OCI-LY7 (cell line): ENCODE measurements at regions of chr3 and their contacts with region 1.

Region 1: GRCh38 chr3:177674186-177674585 is 476.9 kb upstream of the TBL1XR1 start:
- DNase-seq: no peak
- H3K4me3 ChIP-seq: no peak overlapping the region
- H3K27ac ChIP-seq: no peak overlapping the region
- H3K4me1 ChIP-seq: no peaks in the 10 kb centered on the region
- CTCF ChIP-seq: no peak

Region 2: GRCh38 chr3:177385831-177386301 is 288.3 kb before region 1 on chr3:
- CTCF ChIA-PET with region 1: no interaction called
- POLR2A ChIA-PET with region 1: no interaction called
- intact Hi-C with region 1: no loop called
- DNase-seq: no peak
- H3K4me3 ChIP-seq: no peak overlapping the region
- H3K27ac ChIP-seq: no peak overlapping the region
- H3K4me1 ChIP-seq: no peaks in the 10 kb centered on the region
- CTCF ChIP-seq: no peak

Region 3: DNA sequence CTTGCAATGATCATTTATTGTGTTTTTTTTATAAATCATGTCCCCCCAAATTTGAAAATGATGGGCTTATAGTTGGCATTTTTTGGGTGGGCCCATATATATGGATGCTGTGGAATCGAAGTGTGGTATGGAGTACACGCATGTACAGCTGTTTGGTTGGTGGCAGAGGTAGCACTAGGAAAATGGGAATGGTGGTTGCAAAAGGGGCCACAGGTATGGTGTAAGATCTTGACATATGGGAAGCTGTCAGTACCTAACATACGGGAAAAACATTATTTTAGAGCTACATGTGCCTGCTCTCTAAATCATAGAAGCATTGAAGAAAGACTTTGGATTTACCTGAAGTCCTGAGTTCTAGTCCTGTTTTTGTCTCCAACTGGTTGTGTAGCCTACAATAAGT is 17.9 kb before region 1 on chr3:
- CTCF ChIA-PET with region 1: no interaction called
- POLR2A ChIA-PET with region 1: no interaction called
- intact Hi-C with region 1: loop called (anchors 1 kb)
- DNase-seq: no peak
- H3K4me3 ChIP-seq: no peak overlapping the region
- H3K27ac ChIP-seq: no peak overlapping the region
- H3K4me1 ChIP-seq: no peaks in the 10 kb centered on the region
- CTCF ChIP-seq: no peak

Region 4: DNA sequence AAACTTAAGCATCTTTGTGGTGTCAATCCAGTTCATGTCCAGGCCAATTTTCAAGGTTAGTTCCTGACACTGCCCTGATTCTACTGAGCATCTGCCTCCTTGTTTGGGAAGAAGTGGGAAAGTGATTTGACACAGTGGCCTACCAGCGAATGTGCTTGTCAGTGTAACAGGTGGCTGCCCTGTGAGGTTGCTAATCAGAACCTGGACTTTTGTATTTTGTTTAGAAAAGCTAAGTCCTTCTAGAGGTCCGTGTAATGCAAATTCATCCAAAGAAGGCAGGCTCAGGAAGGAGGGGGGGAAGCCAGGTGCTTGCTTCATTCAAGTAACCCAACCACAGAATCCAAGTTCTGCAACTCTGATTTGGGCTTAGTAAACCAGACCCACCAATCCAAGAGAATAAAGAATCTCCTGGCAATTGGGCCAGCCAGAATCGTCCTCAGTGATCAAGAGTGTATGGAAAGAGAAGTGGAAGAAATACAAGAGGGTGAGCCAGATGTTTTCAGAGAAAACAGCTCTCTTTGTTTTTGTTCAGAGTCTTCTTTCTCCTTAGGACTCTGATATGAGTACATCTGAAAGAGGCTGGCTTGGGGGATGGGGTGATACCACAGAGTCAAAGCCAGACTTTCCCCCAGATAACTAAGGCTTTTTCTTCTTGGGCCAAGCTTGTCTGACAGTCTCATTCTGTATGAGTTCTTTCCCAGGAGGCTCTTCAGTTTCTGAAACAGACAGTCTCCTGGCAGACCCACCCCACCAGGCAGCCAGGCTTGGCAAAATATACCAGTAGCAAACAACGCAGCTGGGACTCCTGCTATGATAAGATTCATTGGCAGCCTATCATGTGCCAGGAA is 32.0 kb after region 1 on chr3:
- CTCF ChIA-PET with region 1: no interaction called
- POLR2A ChIA-PET with region 1: no interaction called
- intact Hi-C with region 1: no loop called
- DNase-seq: no peak
- H3K4me3 ChIP-seq: no peak overlapping the region
- H3K27ac ChIP-seq: no peak overlapping the region
- H3K4me1 ChIP-seq: no peaks in the 10 kb centered on the region
- CTCF ChIP-seq: no peak